B cell (primary cell): ENCODE measurements at regions of chrX and their contacts with region 1.

Region 1: GRCh38 chrX:110317820-110318658 is at the start of gene AMMECR1:
- DNase-seq: peak; percentile 90
- ATAC-seq: peak; percentile 81
- H3K4me3 ChIP-seq: peak within 1 kb of the TSS; percentile 52 to 93 (median 77)
- H3K4me3 Mint-ChIP-seq: peak within 1 kb of the TSS; percentile 96
- H3K27ac ChIP-seq: peak within 1 kb of the TSS; percentile 84 to 85
- H3K27ac Mint-ChIP-seq: peak within 1 kb of the TSS; percentile 98
- H3K4me1 ChIP-seq: peaks cover 7 to 14% of the 10 kb centered on the region in 2 donors
- H3K4me1 Mint-ChIP-seq: peaks cover 35% of the 10 kb centered on the region
- H3K27me3 ChIP-seq: no peaks in the 10 kb centered on the region
- H3K27me3 Mint-ChIP-seq: no peaks in the 10 kb centered on the region
- CTCF ChIP-seq: no peak
- total RNA-seq, gene AMMECR1: 10.6 and 12.7 TPM in 2 replicates

Region 2: GRCh38 chrX:109732780-109733657 is 585.0 kb before region 1 on chrX and contains the start of gene ACSL4:
- CTCF ChIA-PET with region 1: no interaction called
- POLR2A ChIA-PET with region 1: interaction called, 5 read pairs
- intact Hi-C with region 1: loop called (anchors 1 kb)
- DNase-seq: peak; percentile 89
- ATAC-seq: peak; percentile 92
- H3K4me3 ChIP-seq: peak within 1 kb of the TSS; percentile 68 to 93 (median 79)
- H3K4me3 Mint-ChIP-seq: peak within 1 kb of the TSS; percentile 96
- H3K27ac ChIP-seq: peak within 1 kb of the TSS; percentile 78 to 85
- H3K27ac Mint-ChIP-seq: peak within 1 kb of the TSS; percentile 93
- H3K4me1 ChIP-seq: peaks cover 7 to 9% of the 10 kb centered on the region in 2 donors
- H3K4me1 Mint-ChIP-seq: peaks cover 33% of the 10 kb centered on the region
- H3K27me3 ChIP-seq: no peaks in the 10 kb centered on the region
- H3K27me3 Mint-ChIP-seq: no peaks in the 10 kb centered on the region
- CTCF ChIP-seq: no peak
- total RNA-seq, gene ACSL4: 29.1 and 38.6 TPM in 2 replicates

Region 3: GRCh38 chrX:110146521-110146920 is 171.5 kb before region 1 on chrX:
- CTCF ChIA-PET with region 1: interaction called, 7 read pairs
- POLR2A ChIA-PET with region 1: no interaction called
- intact Hi-C with region 1: loop called (anchors 5 kb)
- DNase-seq: peak; percentile 55
- ATAC-seq: peak; percentile 39
- H3K4me3 ChIP-seq: no peak overlapping the region
- H3K4me3 Mint-ChIP-seq: no peak overlapping the region
- H3K27ac ChIP-seq: no peak overlapping the region
- H3K27ac Mint-ChIP-seq: no peak overlapping the region
- H3K4me1 ChIP-seq: peaks cover 0 to 4% of the 10 kb centered on the region in 2 donors
- H3K4me1 Mint-ChIP-seq: peaks cover 7% of the 10 kb centered on the region
- H3K27me3 ChIP-seq: no peaks in the 10 kb centered on the region
- H3K27me3 Mint-ChIP-seq: no peaks in the 10 kb centered on the region
- CTCF ChIP-seq: peak; percentile 64

Region 4: GRCh38 chrX:110412971-110413721 is 95.1 kb after region 1 on chrX:
- CTCF ChIA-PET with region 1: interaction called, 4 read pairs
- POLR2A ChIA-PET with region 1: no interaction called
- intact Hi-C with region 1: loop called (anchors 5 kb)
- DNase-seq: peak; percentile 72
- ATAC-seq: peak; percentile 82
- H3K4me3 ChIP-seq: no peak overlapping the region
- H3K4me3 Mint-ChIP-seq: no peak overlapping the region
- H3K27ac ChIP-seq: no peak overlapping the region
- H3K27ac Mint-ChIP-seq: no peak overlapping the region
- H3K4me1 ChIP-seq: no peaks in the 10 kb centered on the region
- H3K4me1 Mint-ChIP-seq: peaks cover 4% of the 10 kb centered on the region
- H3K27me3 ChIP-seq: no peaks in the 10 kb centered on the region
- H3K27me3 Mint-ChIP-seq: peaks cover 2% of the 10 kb centered on the region
- CTCF ChIP-seq: peak; percentile 73

Region 5: DNA sequence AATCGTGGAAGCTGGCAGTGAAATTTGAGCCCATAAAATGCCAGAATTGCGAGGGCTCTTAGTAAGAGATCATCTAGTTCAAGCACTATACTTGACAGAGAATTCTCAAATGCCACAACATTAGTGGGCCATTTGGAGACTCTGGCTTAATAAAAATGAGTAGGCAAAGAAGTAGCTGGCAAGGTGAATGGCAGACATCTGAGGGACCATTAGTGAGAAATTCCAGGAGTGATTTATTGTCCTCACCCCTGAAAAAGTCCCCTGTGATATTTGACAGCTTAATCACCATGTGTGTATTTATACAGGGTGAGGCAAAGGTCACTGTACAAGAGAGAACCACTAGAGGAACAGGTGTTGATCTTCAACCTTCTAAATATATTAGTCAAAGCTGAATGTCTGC is 270.1 kb after region 1 on chrX:
- CTCF ChIA-PET with region 1: no interaction called
- POLR2A ChIA-PET with region 1: no interaction called
- intact Hi-C with region 1: no loop called
- DNase-seq: no peak
- ATAC-seq: no peak
- H3K4me3 ChIP-seq: no peak overlapping the region
- H3K4me3 Mint-ChIP-seq: no peak overlapping the region
- H3K27ac ChIP-seq: no peak overlapping the region
- H3K27ac Mint-ChIP-seq: no peak overlapping the region
- H3K4me1 ChIP-seq: no peaks in the 10 kb centered on the region
- H3K4me1 Mint-ChIP-seq: no peaks in the 10 kb centered on the region
- H3K27me3 ChIP-seq: no peaks in the 10 kb centered on the region
- H3K27me3 Mint-ChIP-seq: no peaks in the 10 kb centered on the region
- CTCF ChIP-seq: no peak

Region 6: GRCh38 chrX:111784667-111785066 is 1466.6 kb after region 1 on chrX:
- CTCF ChIA-PET with region 1: no interaction called
- POLR2A ChIA-PET with region 1: no interaction called
- intact Hi-C with region 1: no loop called
- DNase-seq: no peak
- ATAC-seq: no peak
- H3K4me3 ChIP-seq: no peak overlapping the region
- H3K4me3 Mint-ChIP-seq: no peak overlapping the region
- H3K27ac ChIP-seq: no peak overlapping the region
- H3K27ac Mint-ChIP-seq: no peak overlapping the region
- H3K4me1 ChIP-seq: no peaks in the 10 kb centered on the region
- H3K4me1 Mint-ChIP-seq: no peaks in the 10 kb centered on the region
- H3K27me3 ChIP-seq: no peaks in the 10 kb centered on the region
- H3K27me3 Mint-ChIP-seq: no peaks in the 10 kb centered on the region
- CTCF ChIP-seq: no peak